Dendritic cell treated with granulocyte-macrophage colony-stimulating factor and Interleukin-4, amounts not matched to agents 40 ng/mL and 50 ng/mL, for 4 days (primary cell): ENCODE measurements at regions of chr1 and their contacts with region 1.

Region 1: DNA sequence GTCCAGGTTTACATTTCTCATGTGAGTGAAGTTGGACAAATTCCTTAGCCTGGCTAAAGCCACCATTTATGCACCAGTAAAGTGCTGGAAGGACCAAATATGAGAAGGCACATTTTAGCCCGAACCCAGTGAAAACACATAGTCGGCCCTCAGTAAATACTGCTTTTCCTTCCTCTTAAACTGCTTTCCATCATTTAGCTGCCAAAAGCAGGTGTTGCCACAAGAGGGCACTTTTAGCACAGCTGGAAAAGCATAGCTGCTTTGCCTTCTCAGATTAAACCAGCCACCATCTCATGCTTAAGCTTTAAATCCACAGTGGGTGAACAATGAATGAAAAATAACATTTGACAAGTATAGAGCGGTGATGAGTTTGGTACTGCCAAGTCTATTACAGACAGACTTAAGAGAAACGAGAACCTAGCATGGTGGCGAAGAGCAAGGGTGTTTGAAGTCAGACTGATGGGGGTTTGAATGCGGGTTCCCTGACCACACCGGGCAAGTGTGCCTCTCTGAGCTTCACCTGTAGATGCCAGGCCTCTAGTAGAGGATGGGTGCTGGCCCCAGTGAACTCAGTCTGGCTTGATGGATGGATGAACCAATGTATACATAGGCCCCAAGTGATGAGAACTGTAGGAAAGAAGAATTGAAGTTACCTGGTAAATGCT is 57.8 kb downstream of the SLC35D1 start:
- H3K4me3 Mint-ChIP-seq: no peak overlapping the region
- H3K27ac Mint-ChIP-seq: no peak overlapping the region
- H3K4me1 Mint-ChIP-seq: no peaks in the 10 kb centered on the region
- H3K27me3 Mint-ChIP-seq: no peaks in the 10 kb centered on the region

Region 2: GRCh38 chr1:67149179-67149770 is 153.1 kb after region 1 on chr1:
- intact Hi-C with region 1: loop called (anchors 1 kb)
- H3K4me3 Mint-ChIP-seq: no peak overlapping the region
- H3K27ac Mint-ChIP-seq: no peak overlapping the region
- H3K4me1 Mint-ChIP-seq: peaks cover 8% of the 10 kb centered on the region
- H3K27me3 Mint-ChIP-seq: peaks cover 5% of the 10 kb centered on the region

Region 3: GRCh38 chr1:67214420-67215174 is 218.4 kb after region 1 on chr1:
- intact Hi-C with region 1: loop called (anchors 2 kb)
- H3K4me3 Mint-ChIP-seq: no peak overlapping the region
- H3K27ac Mint-ChIP-seq: no peak overlapping the region
- H3K4me1 Mint-ChIP-seq: no peaks in the 10 kb centered on the region
- H3K27me3 Mint-ChIP-seq: no peaks in the 10 kb centered on the region

Region 4: GRCh38 chr1:67446893-67447292 is 450.7 kb after region 1 on chr1:
- intact Hi-C with region 1: no loop called
- H3K4me3 Mint-ChIP-seq: no peak overlapping the region
- H3K27ac Mint-ChIP-seq: no peak overlapping the region
- H3K4me1 Mint-ChIP-seq: peaks cover 17% of the 10 kb centered on the region
- H3K27me3 Mint-ChIP-seq: no peaks in the 10 kb centered on the region